Endothelial cell of umbilical vein (primary cell): ENCODE measurements at regions of chr6 and their contacts with region 1.

Region 1: GRCh38 chr6:136051140-136051775 is 198.9 kb downstream of the MTFR2 start:
- DNase-seq: peak; percentile 88
- H3K4me3 ChIP-seq: peak overlapping the region in 1 of 3 experiments; percentile 40
- H3K27ac ChIP-seq: peak overlapping the region; percentile 98
- H3K4me1 ChIP-seq: peaks cover 41% of the 10 kb centered on the region
- H3K27me3 ChIP-seq: no peaks in the 10 kb centered on the region
- CTCF ChIP-seq: no peak
- POLR2A ChIP-seq: peak; percentile 65

Region 2: DNA sequence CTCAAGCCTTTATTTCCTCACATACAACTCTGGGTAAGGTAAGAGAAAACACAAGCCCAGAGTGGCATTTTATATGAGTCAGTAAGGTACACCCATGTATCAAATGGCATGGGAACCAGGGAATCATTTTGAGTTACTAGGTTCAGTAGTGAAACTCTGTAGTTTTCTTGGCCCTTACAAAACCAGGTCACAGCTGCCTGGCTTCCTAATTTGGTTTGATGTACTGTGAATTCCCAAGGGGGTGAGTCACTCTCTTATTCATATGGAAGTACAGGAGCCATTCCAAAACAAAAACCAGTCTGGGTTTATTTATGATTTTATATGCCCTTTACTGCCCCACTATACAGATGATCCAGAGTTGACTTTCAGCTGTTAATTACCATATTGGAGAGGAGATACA is 129.1 kb before region 1 on chr6:
- CTCF ChIA-PET with region 1: no interaction called
- POLR2A ChIA-PET with region 1: no interaction called
- dilution Hi-C with region 1: no loop called
- intact Hi-C with region 1: loop called (anchors 5 kb)
- DNase-seq: peak; percentile 90
- H3K4me3 ChIP-seq: no peak overlapping the region
- H3K27ac ChIP-seq: peak overlapping the region; percentile 76
- H3K4me1 ChIP-seq: peaks cover 19% of the 10 kb centered on the region
- H3K27me3 ChIP-seq: no peaks in the 10 kb centered on the region
- CTCF ChIP-seq: no peak
- POLR2A ChIP-seq: no peak

Region 3: DNA sequence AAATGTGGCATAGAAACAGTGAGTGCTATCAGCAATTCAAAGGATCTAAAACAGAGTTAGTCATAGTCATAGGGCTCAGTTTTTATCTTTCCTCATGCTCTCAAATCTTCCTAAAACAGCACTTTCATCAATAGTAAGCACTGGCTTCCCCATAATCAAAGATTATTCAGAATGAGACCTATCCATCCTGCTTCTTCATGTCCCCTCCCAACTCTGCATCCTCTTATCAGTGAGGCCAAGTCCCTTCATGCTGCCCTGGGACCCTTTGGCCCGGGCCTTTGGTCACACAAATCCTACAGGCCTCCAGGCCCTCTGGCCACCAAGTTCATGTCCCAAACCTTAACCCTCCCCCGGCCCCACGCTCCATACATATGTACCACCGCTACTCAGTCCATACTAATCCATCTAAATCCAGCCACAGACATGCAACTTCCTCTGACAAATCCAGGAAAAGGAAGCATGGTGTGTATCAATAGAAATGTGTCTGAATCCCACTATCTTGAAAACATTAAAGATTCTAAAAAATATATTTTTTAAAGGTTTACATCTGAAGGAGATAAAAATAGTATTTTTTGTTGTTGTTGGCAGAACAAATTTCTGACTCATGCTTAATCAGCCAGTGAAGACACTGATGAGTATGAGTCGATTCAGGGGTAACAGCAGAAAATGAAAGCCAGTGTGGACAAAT is 56.3 kb before region 1 on chr6:
- CTCF ChIA-PET with region 1: no interaction called
- POLR2A ChIA-PET with region 1: no interaction called
- dilution Hi-C with region 1: no loop called
- intact Hi-C with region 1: loop called (anchors 1 kb)
- DNase-seq: peak; percentile 82
- H3K4me3 ChIP-seq: no peak overlapping the region
- H3K27ac ChIP-seq: peak overlapping the region; percentile 82
- H3K4me1 ChIP-seq: peaks cover 19% of the 10 kb centered on the region
- H3K27me3 ChIP-seq: no peaks in the 10 kb centered on the region
- CTCF ChIP-seq: no peak
- POLR2A ChIP-seq: no peak

Region 4: DNA sequence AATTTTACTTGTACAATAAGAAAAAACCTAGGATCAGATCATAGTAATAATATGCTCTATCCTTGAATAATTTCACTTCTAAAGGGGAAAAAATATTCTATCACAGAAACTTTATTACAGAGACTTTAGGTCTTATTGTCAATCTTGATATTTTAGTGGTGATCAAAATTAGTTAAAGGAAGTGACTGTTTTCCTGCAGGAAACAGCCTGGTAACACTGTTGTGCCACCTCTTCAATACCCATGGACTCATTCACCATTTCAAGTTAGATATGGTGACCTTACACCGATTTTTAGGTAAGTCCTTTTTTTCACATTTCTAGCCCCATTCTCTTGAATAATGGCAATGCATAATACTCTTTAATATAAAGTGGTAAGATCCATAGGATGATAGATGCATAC is 99.7 kb after region 1 on chr6:
- CTCF ChIA-PET with region 1: no interaction called
- POLR2A ChIA-PET with region 1: no interaction called
- dilution Hi-C with region 1: no loop called
- intact Hi-C with region 1: loop called (anchors 1 kb)
- DNase-seq: peak; percentile 60
- H3K4me3 ChIP-seq: no peak overlapping the region
- H3K27ac ChIP-seq: peak overlapping the region; percentile 53
- H3K4me1 ChIP-seq: peaks cover 18% of the 10 kb centered on the region
- H3K27me3 ChIP-seq: no peaks in the 10 kb centered on the region
- CTCF ChIP-seq: no peak
- POLR2A ChIP-seq: no peak

Region 5: DNA sequence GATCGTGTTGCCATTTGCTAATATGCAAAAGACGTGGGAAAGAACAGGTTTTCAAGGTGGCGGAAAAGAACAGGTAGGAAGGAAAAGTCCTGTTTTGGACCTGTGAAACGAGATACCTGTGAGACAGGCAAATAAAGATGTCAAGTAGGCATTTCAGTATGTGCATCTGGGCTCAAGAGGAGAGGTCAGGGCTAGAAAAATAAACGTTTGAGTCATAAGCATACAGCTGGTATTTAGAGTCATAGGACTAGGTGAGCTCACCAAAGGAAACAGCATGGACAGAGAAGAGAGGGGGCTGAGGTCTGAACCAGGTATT is 183.9 kb after region 1 on chr6:
- CTCF ChIA-PET with region 1: no interaction called
- POLR2A ChIA-PET with region 1: no interaction called
- dilution Hi-C with region 1: no loop called
- intact Hi-C with region 1: no loop called
- DNase-seq: peak; percentile 24
- H3K4me3 ChIP-seq: no peak overlapping the region
- H3K27ac ChIP-seq: no peak overlapping the region
- H3K4me1 ChIP-seq: peaks cover 3% of the 10 kb centered on the region
- H3K27me3 ChIP-seq: no peaks in the 10 kb centered on the region
- CTCF ChIP-seq: no peak
- POLR2A ChIP-seq: no peak